HepG2 (cell line): ENCODE measurements at regions of chr20 and their contacts with region 1.

Region 1: DNA sequence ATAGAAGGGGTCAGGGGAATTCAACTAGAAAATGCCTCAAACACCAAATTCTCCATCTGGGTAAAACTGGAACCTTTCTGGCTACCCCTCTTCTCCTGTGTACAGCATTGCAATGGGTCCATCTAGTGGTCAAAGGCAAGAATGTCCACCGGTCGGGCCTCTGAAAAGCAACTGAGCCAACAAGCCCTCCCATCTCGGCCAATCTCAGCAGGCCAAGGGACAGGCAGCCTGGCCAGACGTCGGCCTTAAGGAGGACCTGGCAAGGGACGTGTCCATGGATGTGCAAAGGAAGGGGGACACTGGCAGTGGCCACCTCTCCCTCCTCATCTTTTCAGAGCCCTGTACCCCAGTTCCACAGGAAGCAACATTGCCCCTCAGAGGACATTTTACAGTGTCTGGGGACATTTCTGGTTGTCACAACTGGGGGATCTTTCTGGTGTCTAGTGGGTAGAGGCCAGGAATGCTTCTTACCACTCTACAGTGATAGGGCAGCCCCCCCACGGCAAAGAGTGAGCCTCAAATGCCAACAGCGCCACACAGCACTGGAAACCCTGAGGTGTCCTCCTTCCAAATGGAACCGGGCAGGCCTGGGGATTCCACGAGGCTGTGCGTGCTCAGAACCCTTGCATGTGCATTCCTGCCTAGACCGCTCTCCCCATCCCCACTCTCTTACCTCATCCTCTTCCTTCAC is 99.8 kb upstream of the FOXA2 start:
- DNase-seq: peak; percentile 84
- ATAC-seq: peak; percentile 91
- H3K4me3 ChIP-seq: no peak overlapping the region
- H3K27ac ChIP-seq: no peak overlapping the region
- H3K4me1 ChIP-seq: peaks cover 18% of the 10 kb centered on the region
- H3K27me3 ChIP-seq: peaks cover 0 to 3% of the 10 kb centered on the region in 2 experiments; a peak in 1 of 5 replicates
- CTCF ChIP-seq: peak; percentile 98
- EP300 ChIP-seq: no peak
- POLR2A ChIP-seq: no peak
- RAD21 ChIP-seq: peak; percentile 99

Region 2: DNA sequence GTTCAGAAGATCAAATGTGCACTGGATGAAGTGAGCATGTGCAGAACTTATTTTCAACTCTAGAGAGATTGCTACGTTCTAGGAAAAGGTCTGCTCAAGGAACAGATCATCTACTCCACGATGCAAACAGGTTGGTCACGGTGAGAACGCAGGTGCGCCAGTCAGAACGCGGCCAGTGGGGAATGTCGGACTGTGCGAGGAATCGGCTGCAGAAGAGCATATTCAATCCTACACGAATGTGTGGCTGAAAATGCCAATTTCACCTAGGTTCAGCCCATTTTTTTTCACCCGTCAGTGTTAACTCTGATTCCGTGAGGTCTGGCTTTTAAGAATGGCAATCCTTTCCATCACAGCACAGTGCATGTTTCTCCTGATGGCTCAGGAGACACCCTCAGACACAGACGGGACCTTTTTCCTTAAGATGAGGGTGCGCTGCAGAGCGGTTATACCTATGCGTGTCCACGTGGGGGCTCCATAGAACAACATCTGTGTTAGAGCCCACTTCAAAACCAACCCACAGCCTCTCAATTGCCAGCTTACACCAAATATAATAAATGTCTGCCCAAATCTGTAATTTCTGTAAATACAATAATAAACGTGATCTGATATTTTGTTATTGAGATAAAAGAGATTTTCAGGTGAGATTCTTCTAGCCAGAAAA is 350.2 kb before region 1 on chr20:
- CTCF ChIA-PET with region 1: interaction called, 231 read pairs
- POLR2A ChIA-PET with region 1: no interaction called
- in situ Hi-C with region 1: loop called (anchors 5 kb)
- intact Hi-C with region 1: loop called (anchors 1 kb)
- DNase-seq: peak; percentile 71
- ATAC-seq: peak; percentile 92
- H3K4me3 ChIP-seq: no peak overlapping the region
- H3K27ac ChIP-seq: no peak overlapping the region
- H3K4me1 ChIP-seq: no peaks in the 10 kb centered on the region
- H3K27me3 ChIP-seq: peaks cover 4 to 20% of the 10 kb centered on the region in 2 experiments; a peak in 3 of 5 replicates
- CTCF ChIP-seq: peak; percentile 90
- EP300 ChIP-seq: no peak
- POLR2A ChIP-seq: no peak
- RAD21 ChIP-seq: peak; percentile 80

Region 3: DNA sequence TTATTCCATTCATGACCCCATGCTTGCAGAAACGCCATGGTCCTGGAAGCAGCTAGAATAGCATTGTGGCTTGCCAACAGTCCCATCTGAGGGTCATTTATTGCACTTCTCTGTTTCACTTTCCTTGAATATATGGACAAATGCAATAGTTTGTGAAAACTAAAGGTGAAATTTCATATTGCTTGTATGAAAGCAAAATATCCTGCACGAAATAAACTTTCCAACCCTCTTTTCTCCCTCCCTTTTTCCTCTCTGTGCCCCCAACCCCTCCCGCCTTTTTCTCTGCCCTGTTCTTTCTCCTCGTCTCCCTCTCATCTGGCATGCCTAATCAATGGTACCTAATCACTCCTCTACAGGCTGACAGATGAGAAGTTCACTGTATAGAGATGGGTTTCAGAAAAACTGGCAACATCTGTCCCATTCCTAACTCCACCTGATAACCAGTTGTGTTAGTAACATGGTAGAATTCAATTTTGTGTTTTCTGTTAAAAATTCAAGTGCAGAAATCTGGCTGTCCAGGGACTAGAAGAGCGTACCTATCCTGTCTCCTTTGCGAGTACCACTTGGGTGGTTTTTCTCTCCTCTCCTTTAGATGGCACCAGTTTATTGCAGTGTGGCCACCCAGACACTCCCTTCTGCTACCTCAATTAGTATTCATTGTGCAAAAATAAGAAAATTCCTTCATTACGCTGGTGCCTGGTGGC is 298.5 kb before region 1 on chr20:
- CTCF ChIA-PET with region 1: interaction called, 15 read pairs
- POLR2A ChIA-PET with region 1: no interaction called
- in situ Hi-C with region 1: no loop called
- intact Hi-C with region 1: loop called (anchors 1 kb)
- DNase-seq: peak; percentile 75
- ATAC-seq: peak; percentile 94
- H3K4me3 ChIP-seq: no peak overlapping the region
- H3K27ac ChIP-seq: no peak overlapping the region
- H3K4me1 ChIP-seq: peaks cover 17% of the 10 kb centered on the region
- H3K27me3 ChIP-seq: peaks cover 0 to 45% of the 10 kb centered on the region in 2 experiments; a peak in 3 of 5 replicates
- CTCF ChIP-seq: peak; percentile 92
- EP300 ChIP-seq: no peak
- POLR2A ChIP-seq: no peak
- RAD21 ChIP-seq: peak; percentile 95

Region 4: DNA sequence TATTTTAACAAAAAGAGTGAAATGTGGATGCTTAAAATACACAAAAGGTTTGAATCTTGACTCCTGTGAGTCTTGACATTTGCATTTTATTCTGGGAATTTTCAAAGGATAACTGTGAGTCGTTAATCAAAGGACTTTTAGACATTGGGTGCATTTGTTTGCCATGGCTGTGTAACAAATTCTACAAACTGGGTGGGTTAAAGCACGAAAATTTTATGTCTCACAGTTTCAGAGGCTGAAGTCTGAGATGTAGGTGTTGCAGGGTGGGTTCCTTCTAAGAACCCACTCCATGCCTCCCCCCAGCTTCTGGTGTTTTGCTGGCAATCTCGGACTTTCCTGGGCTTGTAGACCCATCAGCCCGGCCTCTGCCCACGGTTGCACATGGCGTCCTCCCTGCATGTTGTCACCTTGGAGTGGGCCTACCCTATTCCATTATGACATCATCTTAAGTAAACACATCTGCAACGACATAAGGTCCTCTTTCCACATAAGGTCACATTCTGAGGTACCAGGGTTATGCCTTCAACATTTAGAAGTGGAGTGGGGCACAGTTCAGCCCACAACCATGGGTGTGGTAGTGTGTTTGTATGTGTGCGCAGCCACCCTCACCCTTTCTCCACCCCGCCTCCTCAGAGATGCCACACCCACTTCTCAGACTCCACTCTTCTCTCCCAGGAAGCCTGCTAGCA is 212.9 kb before region 1 on chr20:
- CTCF ChIA-PET with region 1: no interaction called
- POLR2A ChIA-PET with region 1: no interaction called
- in situ Hi-C with region 1: no loop called
- intact Hi-C with region 1: loop called (anchors 5 kb)
- DNase-seq: peak; percentile 72
- ATAC-seq: peak; percentile 44
- H3K4me3 ChIP-seq: peak overlapping the region in 1 of 3 experiments; percentile 4; a peak in 1 of 6 replicates
- H3K27ac ChIP-seq: peak overlapping the region; percentile 2
- H3K4me1 ChIP-seq: peaks cover 56% of the 10 kb centered on the region
- H3K27me3 ChIP-seq: peaks cover 7 to 17% of the 10 kb centered on the region in 2 experiments; a peak in 3 of 5 replicates
- CTCF ChIP-seq: no peak
- EP300 ChIP-seq: peak in 1 of 2 experiments; percentile 38; a peak in 1 of 4 replicates
- POLR2A ChIP-seq: no peak
- RAD21 ChIP-seq: no peak

Region 5: GRCh38 chr20:22617160-22617559 is 67.1 kb before region 1 on chr20:
- CTCF ChIA-PET with region 1: no interaction called
- POLR2A ChIA-PET with region 1: no interaction called
- in situ Hi-C with region 1: no loop called
- intact Hi-C with region 1: loop called (anchors 5 kb)
- DNase-seq: peak; percentile 58
- ATAC-seq: peak; percentile 57
- H3K4me3 ChIP-seq: no peak overlapping the region
- H3K27ac ChIP-seq: no peak overlapping the region
- H3K4me1 ChIP-seq: peaks cover 12% of the 10 kb centered on the region
- H3K27me3 ChIP-seq: 0 out of 5 replicates have a peak, but pooled peaks cover 4 to 11% of the 10 kb centered on the region in 2 experiments
- CTCF ChIP-seq: no peak
- EP300 ChIP-seq: no peak
- POLR2A ChIP-seq: no peak
- RAD21 ChIP-seq: no peak

Region 6: DNA sequence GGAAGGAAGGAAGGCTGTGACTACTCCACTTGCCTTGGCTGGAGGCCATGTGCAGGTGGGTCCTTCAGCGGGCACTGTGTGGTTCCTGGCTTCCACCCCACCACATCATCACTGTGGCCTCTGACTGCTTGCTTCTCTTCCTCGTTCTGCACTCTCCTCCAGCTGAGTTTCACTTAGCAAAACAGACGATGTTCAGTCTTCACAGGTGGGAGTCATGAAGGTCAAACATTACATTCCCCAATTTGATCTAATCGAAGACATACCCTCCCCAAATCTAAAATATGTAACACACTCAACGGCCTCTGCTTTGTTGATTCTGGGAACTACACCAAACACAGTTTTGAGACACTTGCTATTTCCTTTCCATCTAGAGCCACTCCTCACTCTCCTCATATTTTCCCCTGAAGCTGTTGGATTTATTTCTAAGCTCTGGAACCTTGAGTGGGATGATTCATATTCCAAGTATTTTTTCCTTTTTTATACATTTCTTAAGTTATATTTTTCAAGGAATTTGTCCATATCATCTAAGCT is 32.7 kb after region 1 on chr20:
- CTCF ChIA-PET with region 1: no interaction called
- POLR2A ChIA-PET with region 1: no interaction called
- in situ Hi-C with region 1: no loop called
- intact Hi-C with region 1: no loop called
- DNase-seq: no peak
- ATAC-seq: no peak
- H3K4me3 ChIP-seq: no peak overlapping the region
- H3K27ac ChIP-seq: no peak overlapping the region
- H3K4me1 ChIP-seq: no peaks in the 10 kb centered on the region
- H3K27me3 ChIP-seq: no peaks in the 10 kb centered on the region
- CTCF ChIP-seq: no peak
- EP300 ChIP-seq: no peak
- POLR2A ChIP-seq: no peak
- RAD21 ChIP-seq: no peak